Posterior vena cava (tissue), 2 donors: ENCODE measurements at regions of chr15 and their contacts with region 1.

Region 1: DNA sequence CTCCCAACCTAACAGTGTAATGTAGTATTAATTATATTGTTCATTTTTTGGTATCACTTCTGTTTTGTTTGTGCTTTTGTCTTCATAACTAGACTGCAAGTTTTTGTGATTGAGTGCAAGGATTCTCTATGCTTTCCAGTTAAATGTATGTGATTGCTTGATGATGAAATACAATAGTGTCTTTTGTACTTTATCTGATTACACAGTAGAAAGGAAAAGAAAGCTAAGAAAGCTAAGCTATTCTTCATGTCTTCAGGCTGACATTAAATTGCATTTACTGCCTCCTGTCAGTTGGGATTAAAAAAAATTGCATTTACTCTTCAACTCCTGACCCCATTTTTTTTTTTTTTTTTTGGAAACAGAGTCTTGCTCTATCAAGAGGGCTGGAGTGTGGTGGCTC is 28.5 kb downstream of the RTF1 start:
- DNase-seq: no peak

Region 2: DNA sequence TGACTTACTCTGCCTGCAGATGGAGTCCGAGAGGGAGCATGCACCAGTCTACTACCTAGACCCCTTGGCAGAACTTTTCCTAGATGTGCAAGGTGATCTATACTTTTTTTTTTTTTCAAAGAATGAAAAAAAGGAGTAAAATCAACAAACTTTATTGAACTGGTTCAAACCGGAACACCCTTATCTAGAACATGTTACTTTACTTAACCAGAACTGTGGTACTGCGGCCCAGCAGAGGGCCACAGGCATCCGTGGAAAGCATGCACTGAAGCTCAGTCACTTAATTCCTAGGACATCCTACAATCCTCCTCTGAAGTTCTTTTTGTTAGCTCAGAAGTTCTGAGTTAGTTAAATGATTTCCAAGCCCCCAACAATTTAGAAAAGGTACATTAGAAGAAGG is 470.5 kb before region 1 on chr15:
- intact Hi-C with region 1: no loop called
- DNase-seq: no peak

Region 3: GRCh38 chr15:42069496-42070278 is 624.3 kb after region 1 on chr15:
- intact Hi-C with region 1: loop called in 1 of 2 experiments (anchors 5 kb)
- DNase-seq: peak; percentile 71